Common myeloid progenitor, CD34-positive (primary cell): ENCODE measurements at regions of chr7 and their contacts with region 1.

Region 1: GRCh38 chr7:100195222-100195621 is 17.5 kb downstream of the STAG3 start:
- DNase-seq: no peak
- H3K4me3 ChIP-seq: no peak overlapping the region
- H3K27ac ChIP-seq: no peak overlapping the region
- H3K4me1 ChIP-seq: peaks cover 0 to 13% (median under 1%) of the 10 kb centered on the region in 4 experiments
- H3K27me3 ChIP-seq: no peaks in the 10 kb centered on the region

Region 2: GRCh38 chr7:99928994-99929729 is 266.1 kb before region 1 on chr7 and contains the start of gene GJC3:
- CTCF ChIA-PET with region 1: no interaction called
- POLR2A ChIA-PET with region 1: no interaction called
- DNase-seq: peak; percentile 53 to 69 (median 68)
- H3K4me3 ChIP-seq: peak within 1 kb of the TSS in 6 of 7 experiments; percentile 17 to 79 (median 58)
- H3K27ac ChIP-seq: no peak within 1 kb of the TSS
- H3K4me1 ChIP-seq: peaks cover 0 to 13% (median 8%) of the 10 kb centered on the region in 4 experiments
- H3K27me3 ChIP-seq: peaks cover 0 to 4% (median 2%) of the 10 kb centered on the region in 5 experiments

Region 3: DNA sequence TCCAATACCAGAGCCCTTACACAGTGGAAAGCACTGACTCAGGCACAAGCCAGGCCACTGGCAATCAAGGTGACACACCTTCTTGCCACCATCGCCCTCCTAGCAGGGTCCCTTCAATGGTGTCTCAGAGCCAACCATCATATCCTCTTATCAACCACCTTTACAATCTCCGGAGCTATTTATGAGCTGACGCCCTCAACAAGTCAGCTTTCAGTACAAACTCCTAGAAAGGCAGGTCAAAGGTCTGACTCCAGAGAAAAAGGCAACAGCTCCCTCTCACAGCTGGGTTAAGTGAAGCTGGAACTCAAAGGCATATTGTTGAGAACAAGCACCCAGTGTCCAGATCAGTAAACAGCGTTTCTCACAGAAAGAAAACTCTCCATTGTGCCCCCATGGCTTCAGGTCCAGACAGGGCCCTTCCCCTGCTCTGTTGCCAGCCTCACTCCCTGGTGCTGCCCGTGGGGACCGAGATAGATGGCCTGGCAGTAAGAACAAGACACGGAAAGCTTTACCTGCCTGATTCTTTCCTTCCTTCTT is 116.1 kb before region 1 on chr7:
- CTCF ChIA-PET with region 1: no interaction called
- POLR2A ChIA-PET with region 1: no interaction called
- DNase-seq: no peak
- H3K4me3 ChIP-seq: no peak overlapping the region
- H3K27ac ChIP-seq: peak overlapping the region in 1 of 2 experiments; percentile 30
- H3K4me1 ChIP-seq: peaks cover 11 to 30% (median 26%) of the 10 kb centered on the region in 4 experiments
- H3K27me3 ChIP-seq: no peaks in the 10 kb centered on the region

Region 4: GRCh38 chr7:100208911-100209408 is 13.7 kb after region 1 on chr7:
- CTCF ChIA-PET with region 1: interaction called, 14 read pairs
- POLR2A ChIA-PET with region 1: no interaction called
- DNase-seq: peak in 1 of 3 donors; percentile 15
- H3K4me3 ChIP-seq: no peak overlapping the region
- H3K27ac ChIP-seq: no peak overlapping the region
- H3K4me1 ChIP-seq: peaks cover 0 to 9% (median 4%) of the 10 kb centered on the region in 4 experiments
- H3K27me3 ChIP-seq: no peaks in the 10 kb centered on the region

Region 5: GRCh38 chr7:100215895-100216294 is 20.7 kb after region 1 on chr7:
- CTCF ChIA-PET with region 1: interaction called, 16 read pairs
- POLR2A ChIA-PET with region 1: no interaction called
- DNase-seq: peak in 2 of 3 donors; percentile 17 to 23
- H3K4me3 ChIP-seq: no peak overlapping the region
- H3K27ac ChIP-seq: no peak overlapping the region
- H3K4me1 ChIP-seq: peaks cover 0 to 11% (median 5%) of the 10 kb centered on the region in 4 experiments
- H3K27me3 ChIP-seq: no peaks in the 10 kb centered on the region